Head of caudate nucleus (tissue), 42 donors: ENCODE measurements at regions of chr12 and their contacts with region 1.

Region 1: DNA sequence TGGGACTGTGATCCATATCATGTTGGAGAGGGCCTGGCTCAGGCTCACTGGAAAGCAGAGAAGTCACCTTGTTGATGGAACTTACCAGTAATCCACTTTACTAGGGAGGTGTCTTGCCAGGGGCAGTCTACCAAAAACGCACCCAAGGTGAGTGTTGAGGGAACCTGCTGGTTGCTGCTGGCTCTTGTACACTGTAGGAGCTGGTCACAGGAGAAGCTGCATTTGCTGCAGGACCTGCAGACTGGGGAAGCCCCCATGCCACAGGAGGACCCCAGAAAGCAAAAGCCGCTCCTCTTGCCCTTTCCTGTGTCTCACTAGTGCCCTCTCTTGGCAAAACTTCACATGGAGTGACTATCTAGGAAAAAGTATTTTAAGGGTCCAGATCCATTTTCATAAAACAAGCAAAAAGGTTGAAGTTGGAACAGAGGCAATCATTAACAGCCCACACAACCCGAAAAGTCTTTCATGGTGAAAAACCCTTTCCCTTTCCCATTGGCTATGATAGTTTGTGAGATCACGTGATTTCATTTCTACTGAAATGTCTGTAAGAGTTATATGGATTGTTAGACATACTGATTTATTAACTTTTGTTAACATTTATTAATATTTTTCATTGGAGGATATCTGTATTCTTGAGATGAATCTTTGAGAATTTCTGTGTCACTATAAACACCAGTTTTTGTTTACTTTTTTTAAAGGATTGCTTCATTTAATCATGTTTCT is 59.2 kb downstream of the RASSF8 start:
- DNase-seq: peak in 11 of 42 donors; percentile 23 to 73 (median 47)

Region 2: GRCh38 chr12:25436203-25437030 is 581.2 kb before region 1 on chr12:
- intact Hi-C with region 1: loop called (anchors 5 kb)
- DNase-seq: peak in 29 of 42 donors; percentile 7 to 79 (median 35)